A549 (cell line): ENCODE measurements at regions of chr19 and their contacts with region 1.

Region 1: DNA sequence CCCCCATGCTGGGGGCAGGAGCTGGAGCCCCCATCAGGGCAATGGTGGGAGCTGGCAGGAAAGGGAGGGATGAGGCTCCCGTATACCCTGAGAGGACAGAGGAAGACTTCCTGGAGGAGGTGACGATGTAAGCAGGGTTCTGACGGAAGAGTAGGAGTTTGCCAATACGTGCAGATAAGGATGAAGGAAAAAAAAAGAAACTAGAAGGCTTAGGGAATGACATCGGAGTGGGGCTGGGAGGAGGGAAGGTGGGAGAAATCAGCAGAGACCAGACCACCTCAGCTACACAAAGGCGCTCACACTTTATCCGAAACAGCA is 32.3 kb downstream of the ARHGEF18 start:
- DNase-seq: no peak
- ATAC-seq: no peak
- H3K4me3 ChIP-seq: no peak overlapping the region
- H3K27ac ChIP-seq: peak overlapping the region in 1 of 2 experiments; percentile 26; a peak in 1 of 6 replicates
- H3K4me1 ChIP-seq: peaks cover 3% of the 10 kb centered on the region; the same call in 2 of the 3 replicates
- CTCF ChIP-seq: no peak
- EP300 ChIP-seq: no peak
- POLR2A ChIP-seq: no peak
- RAD21 ChIP-seq: no peak

Region 2: DNA sequence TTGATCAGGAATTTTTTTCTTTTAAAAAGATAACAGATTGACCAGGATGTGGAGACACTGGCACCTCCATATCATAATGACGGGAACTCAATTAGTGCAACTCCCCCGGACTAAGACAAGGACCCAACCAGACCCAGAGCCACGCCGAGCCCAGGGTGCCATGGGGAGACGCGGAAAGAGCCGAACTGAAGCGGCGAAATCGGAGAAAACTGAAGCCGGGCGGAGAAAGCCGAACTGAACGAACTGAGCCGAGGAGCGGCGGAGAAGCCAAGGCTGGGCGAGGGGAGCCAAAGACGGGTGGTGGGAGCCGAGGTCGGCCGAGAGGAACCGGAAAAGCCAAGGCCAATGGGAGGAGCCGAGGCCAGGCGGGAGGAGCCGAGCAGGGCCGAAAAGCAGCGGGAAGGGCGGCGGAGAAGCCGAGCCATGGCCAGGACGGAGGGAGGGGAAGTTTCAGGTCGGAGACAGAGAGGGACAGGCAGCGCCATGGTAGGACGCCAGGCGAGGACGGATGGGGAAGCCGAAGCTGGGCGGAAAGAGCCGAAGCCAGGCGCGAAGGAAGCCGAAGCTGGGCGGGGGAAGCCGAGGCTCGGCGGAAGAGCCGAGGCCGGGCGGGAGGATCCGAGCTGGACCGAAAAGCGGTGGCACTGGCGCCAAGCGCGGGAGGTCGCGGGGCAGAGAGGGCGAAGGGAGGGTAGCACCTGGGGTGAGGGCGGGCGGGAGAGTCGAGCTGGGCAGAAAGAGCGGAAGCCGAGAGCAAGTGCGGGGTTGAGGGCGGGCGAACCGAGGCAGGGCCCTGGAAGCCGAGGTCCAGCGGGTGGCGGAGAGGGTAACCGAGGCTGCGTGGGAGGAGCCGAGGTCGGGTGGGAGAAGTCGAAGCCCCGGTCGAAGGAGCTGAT is 282.1 kb before region 1 on chr19:
- CTCF ChIA-PET with region 1: interaction called, 12 read pairs
- POLR2A ChIA-PET with region 1: no interaction called
- DNase-seq: peak; percentile 70 to 86
- ATAC-seq: peak; percentile 89 to 96
- H3K4me3 ChIP-seq: peak overlapping the region; percentile 50
- H3K27ac ChIP-seq: peak overlapping the region; percentile 78 to 96
- H3K4me1 ChIP-seq: 0 out of 3 replicates have a peak, but pooled peaks cover 3% of the 10 kb centered on the region
- CTCF ChIP-seq: no peak
- EP300 ChIP-seq: no peak
- POLR2A ChIP-seq: peak; percentile 51
- RAD21 ChIP-seq: no peak

Region 3: DNA sequence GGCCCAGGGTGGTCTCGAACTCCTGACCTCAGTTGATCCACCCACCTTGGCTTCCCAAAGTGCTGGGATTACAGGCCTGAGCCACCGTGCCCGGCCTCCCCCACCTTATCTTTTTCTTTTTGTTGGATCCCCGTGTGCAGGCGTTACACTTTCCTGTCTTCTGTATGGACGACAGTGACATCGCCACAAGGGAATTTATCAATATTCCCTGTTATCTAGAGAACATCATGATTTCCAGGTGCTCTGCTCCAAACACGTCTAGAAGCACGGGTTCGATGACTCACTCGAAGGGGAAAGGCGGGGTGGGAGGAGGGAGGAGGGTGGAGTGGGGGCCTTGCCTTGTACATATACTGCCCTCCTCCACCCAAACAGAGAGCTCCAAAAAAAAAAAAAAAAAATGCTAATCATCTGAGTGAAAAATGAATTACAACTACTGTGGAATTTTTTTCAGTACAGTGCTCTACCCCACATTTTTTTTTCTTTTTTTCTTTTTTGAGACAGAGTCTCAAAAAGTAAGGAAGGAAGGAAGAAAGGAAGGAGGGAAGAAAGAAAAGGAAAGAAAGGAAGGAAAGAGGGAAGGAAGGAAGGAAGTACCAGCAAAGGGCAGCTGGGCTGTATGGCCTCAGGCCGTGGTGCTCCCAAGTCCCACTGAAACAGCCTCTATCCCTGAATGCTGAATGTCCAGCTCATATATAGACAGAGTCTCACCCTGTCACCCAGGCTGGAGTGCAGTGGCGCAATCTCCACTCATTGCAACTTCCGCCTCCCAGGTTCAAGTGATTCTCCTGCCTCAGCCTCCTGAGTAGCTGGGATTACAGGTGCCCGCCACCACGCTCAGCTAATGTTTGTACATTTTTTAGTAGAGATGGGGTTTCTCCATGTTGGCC is 123.6 kb before region 1 on chr19:
- CTCF ChIA-PET with region 1: no interaction called
- POLR2A ChIA-PET with region 1: no interaction called
- DNase-seq: peak in 1 of 2 experiments; percentile 5
- ATAC-seq: no peak
- H3K4me3 ChIP-seq: no peak overlapping the region
- H3K27ac ChIP-seq: no peak overlapping the region
- H3K4me1 ChIP-seq: no peaks in the 10 kb centered on the region
- CTCF ChIP-seq: no peak
- EP300 ChIP-seq: no peak
- POLR2A ChIP-seq: no peak
- RAD21 ChIP-seq: no peak